ENCODE measurements at regions of chr14 and their contacts with region 1.

Region 1: DNA sequence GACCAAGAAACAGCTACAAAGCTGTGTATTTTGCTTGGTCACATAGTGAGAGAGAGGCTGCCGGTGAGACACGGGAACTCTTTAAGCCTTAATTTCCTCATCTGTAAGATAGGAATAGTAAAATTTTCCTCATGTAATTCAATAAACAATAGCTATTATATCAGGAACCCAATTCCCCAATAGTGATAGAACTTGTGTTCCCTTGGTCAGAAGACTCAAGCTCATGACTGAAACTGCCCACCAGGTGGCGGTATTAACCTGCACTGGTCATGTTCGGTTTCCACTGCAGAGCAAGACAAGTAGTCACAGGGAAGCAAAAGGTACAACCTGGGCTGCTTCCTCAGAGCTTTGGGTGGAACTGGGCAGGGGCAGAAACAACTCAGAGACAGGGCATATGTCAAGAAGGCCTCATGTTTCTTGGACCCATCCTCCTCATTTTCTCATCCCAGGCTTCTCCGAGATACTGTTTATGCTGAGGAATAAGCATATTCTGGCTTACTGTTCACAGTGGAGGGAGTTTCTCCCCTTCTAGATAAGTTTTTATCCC is 4.2 kb upstream of the AJUBA start:
- DNase-seq: peak; percentile 87
- H3K4me3 ChIP-seq: no peak overlapping the region
- H3K27ac ChIP-seq: no peak overlapping the region
- H3K4me1 ChIP-seq: no peaks in the 10 kb centered on the region
- H3K27me3 ChIP-seq: no peaks in the 10 kb centered on the region
- CTCF ChIP-seq: peak; percentile 91

Region 2: DNA sequence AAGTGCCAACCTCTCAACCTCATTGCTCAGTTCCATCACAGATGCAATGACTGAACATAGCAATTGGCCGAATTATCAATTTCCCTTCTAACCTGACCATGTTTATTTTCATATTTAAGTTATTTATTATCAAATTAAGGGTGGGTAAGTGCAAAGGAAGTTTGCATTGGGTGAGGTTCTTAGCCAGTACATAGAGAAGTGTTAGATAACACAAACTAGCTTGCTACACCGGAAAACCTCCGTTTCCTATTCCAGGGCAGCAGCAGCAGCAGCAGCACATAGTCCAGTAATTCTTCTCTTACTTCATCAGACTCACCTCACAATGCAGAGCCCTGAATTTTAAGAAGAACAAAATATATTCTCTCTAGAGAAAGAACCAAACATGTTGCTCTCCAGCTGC is 1112.4 kb before region 1 on chr14:
- CTCF ChIA-PET with region 1: no interaction called
- POLR2A ChIA-PET with region 1: no interaction called
- intact Hi-C with region 1: no loop called
- DNase-seq: no peak
- H3K4me3 ChIP-seq: no peak overlapping the region
- H3K27ac ChIP-seq: no peak overlapping the region
- H3K4me1 ChIP-seq: no peaks in the 10 kb centered on the region
- H3K27me3 ChIP-seq: peaks cover 16% of the 10 kb centered on the region
- CTCF ChIP-seq: no peak

Region 3: GRCh38 chr14:22386924-22387775 is 599.4 kb before region 1 on chr14:
- CTCF ChIA-PET with region 1: no interaction called
- POLR2A ChIA-PET with region 1: no interaction called
- intact Hi-C with region 1: loop called (anchors 2 kb)
- DNase-seq: peak; percentile 94
- H3K4me3 ChIP-seq: no peak overlapping the region
- H3K27ac ChIP-seq: no peak overlapping the region
- H3K4me1 ChIP-seq: peaks cover 31% of the 10 kb centered on the region
- H3K27me3 ChIP-seq: no peaks in the 10 kb centered on the region
- CTCF ChIP-seq: peak; percentile 87

Region 4: DNA sequence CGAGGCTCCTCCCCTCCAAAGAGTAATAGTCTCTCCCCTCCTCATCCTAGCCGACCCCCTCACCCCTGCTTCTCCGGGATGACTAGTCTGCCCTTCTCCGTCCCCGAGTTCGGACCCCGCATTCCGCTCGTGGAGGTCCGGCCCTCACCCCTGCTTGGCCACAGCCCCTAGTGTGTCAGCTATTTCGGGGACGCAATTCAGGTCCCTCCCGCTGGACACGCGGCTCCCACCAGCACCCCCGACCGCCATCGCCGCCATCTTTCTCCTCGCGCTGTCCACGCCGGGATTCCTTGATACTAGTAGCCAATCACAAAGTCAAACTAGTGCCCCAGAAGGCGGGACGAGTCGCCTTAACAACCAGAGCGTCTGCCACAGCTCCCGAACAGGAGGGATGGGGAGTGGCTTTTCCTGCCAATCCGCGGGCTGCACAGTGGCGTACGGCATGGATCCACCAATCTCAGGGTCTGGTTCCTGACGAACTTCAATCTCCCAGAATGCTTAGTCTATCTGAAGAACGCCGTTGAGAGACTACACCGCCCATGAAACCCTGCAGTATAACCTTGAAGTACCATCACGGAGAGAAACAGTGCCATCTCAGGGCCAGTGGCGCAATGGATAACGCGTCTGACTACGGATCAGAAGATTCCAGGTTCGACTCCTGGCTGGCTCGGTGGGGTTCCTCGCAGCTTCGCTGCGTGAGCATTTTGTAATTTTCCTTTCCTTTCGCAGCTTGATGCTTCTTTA is 57.3 kb before region 1 on chr14 and contains the start of gene PRMT5:
- CTCF ChIA-PET with region 1: interaction called, 6 read pairs
- POLR2A ChIA-PET with region 1: no interaction called
- intact Hi-C with region 1: loop called (anchors 5 kb)
- DNase-seq: peak; percentile 100
- H3K4me3 ChIP-seq: peak within 1 kb of the TSS; percentile 88
- H3K27ac ChIP-seq: peak within 1 kb of the TSS; percentile 87
- H3K4me1 ChIP-seq: peaks cover 16% of the 10 kb centered on the region
- H3K27me3 ChIP-seq: no peaks in the 10 kb centered on the region
- CTCF ChIP-seq: no peak
- total RNA-seq, gene PRMT5: 244 and 273 TPM in 2 replicates

Region 5: GRCh38 chr14:23057757-23058653 is 71.4 kb after region 1 on chr14:
- CTCF ChIA-PET with region 1: interaction called, 65 read pairs
- POLR2A ChIA-PET with region 1: interaction called, 13 read pairs
- intact Hi-C with region 1: loop called (anchors 1 kb)
- DNase-seq: peak; percentile 93
- H3K4me3 ChIP-seq: peak overlapping the region; percentile 76
- H3K27ac ChIP-seq: peak overlapping the region; percentile 77
- H3K4me1 ChIP-seq: peaks cover 27% of the 10 kb centered on the region
- H3K27me3 ChIP-seq: no peaks in the 10 kb centered on the region
- CTCF ChIP-seq: peak; percentile 98

Region 6: DNA sequence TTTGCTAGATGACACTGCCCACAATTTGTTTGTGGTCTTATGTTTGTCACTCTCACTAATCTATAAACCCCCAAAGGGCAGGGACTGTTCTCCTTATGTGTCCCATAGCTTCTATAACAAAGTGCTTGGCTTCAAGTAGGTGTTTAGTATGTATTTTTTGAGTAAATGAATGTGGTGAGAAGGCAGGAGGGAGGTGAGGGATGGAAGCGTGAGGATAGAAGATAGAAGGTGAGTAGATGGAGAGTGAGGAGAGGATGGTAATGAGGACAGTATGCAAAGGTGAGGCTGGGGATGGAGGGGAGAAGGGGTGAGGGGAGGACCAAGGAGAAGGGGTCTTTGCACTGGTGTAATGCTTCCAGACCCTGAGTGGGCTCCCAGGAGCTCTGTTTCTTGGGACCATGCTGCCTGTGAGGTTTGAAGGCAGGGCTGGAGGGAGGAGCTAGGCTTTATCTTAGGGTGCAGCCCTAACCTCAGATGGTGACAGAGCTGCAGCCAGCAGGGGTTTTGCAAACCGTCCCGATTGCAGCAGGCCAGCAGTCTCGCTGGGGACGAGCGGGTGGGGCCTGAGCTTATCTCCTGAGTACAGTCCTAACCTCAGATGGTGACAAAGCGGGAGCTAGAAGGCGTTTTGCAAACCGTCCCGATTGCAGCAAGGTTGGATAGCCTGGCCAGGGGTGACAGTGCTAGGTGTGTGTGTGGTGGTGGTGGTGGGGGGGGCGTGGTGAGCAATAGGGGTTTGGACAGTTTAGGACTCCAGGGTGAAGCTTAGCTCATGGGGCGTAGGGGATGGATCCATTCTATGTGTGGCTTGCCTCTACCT is 126.0 kb after region 1 on chr14:
- CTCF ChIA-PET with region 1: interaction called, 7 read pairs
- POLR2A ChIA-PET with region 1: no interaction called
- intact Hi-C with region 1: loop called (anchors 2 kb)
- DNase-seq: no peak
- H3K4me3 ChIP-seq: no peak overlapping the region
- H3K27ac ChIP-seq: no peak overlapping the region
- H3K4me1 ChIP-seq: no peaks in the 10 kb centered on the region
- H3K27me3 ChIP-seq: peaks cover 13% of the 10 kb centered on the region
- CTCF ChIP-seq: no peak

Region 7: DNA sequence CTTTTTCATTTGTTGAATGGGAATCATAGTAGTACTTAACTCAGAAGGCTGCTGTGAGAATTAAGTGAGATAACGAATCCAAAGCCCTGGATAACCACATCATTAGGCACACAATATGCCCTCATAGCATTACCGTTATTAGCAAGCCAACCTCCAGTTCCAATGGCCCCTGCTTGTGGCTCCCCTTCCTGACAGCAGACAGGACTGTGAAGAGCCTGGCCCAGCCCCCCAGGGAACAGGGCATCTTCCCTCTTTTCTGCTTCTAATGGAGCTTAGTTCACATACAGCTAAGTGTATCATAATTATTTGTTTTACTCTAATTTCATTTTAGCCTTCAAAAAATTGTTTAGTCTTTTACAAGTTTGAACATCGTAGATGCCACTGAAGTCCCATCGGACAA is 689.3 kb after region 1 on chr14:
- CTCF ChIA-PET with region 1: no interaction called
- POLR2A ChIA-PET with region 1: no interaction called
- intact Hi-C with region 1: no loop called
- DNase-seq: no peak
- H3K4me3 ChIP-seq: no peak overlapping the region
- H3K27ac ChIP-seq: no peak overlapping the region
- H3K4me1 ChIP-seq: no peaks in the 10 kb centered on the region
- H3K27me3 ChIP-seq: peaks cover 28% of the 10 kb centered on the region
- CTCF ChIP-seq: no peak

Measured in A673 (cell line).